Right cardiac atrium (tissue), 5 donors: ENCODE measurements at regions of chr11 and their contacts with region 1.

Region 1: DNA sequence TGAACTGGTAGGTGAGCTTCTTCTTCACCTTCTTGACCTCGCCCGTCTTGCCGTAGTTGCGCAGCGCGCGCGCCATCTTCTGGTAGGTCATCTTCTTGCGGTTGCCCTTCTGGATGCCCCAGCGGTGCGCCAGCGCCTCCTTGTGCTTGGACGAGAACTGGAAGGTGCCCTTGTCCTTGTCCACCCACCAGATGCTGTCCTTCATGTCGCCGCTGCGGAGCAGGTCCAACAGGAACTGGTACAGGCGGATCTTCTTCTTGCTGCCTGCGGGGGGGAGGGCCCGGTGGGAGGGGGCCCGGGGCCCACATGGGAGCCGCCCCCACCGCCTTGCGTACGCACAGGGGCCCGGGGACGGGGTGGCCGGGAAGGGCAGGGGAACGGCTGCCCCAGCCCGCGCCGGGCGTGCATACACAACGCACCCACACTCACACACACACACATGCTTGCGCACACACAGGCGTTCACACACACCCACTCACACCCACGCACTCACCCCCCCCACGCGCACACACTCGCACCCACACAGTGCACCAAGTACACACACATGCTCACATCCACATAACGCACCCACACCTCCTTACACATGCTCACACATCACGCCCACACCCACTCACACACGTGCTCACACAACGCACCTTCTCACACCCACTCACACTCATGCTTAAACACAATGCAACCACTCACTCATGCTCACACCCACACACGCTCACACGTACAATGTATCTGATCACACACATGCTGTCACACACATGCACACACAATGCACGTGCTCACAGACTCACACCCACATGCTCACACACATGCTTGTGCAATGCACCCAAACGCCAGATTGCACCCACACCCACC is 3.0 kb upstream of the MYBPC3 start:
- DNase-seq: peak; percentile 94 to 98 (median 98)
- ATAC-seq: peak; percentile 54 to 57
- H3K4me3 ChIP-seq: peak overlapping the region; percentile 59
- H3K27ac ChIP-seq: peak overlapping the region; percentile 1
- H3K4me1 ChIP-seq: no peaks in the 10 kb centered on the region
- H3K27me3 ChIP-seq: no peaks in the 10 kb centered on the region

Region 2: GRCh38 chr11:47176328-47177228 is 178.9 kb before region 1 on chr11 and contains the start of gene ARFGAP2:
- intact Hi-C with region 1: loop called in 3 of 4 experiments (anchors 2 to 10 kb)
- DNase-seq: peak; percentile 97 to 99 (median 99)
- ATAC-seq: peak; percentile 95 to 96
- H3K4me3 ChIP-seq: peak within 1 kb of the TSS; percentile 82
- H3K27ac ChIP-seq: peak within 1 kb of the TSS; percentile 99
- H3K4me1 ChIP-seq: peaks cover 13% of the 10 kb centered on the region
- H3K27me3 ChIP-seq: no peaks in the 10 kb centered on the region
- total RNA-seq, gene ARFGAP2: 43.8 to 67.4 (median 56.5) TPM

Region 3: GRCh38 chr11:47186076-47186936 is 169.2 kb before region 1 on chr11 and contains the start of gene PACSIN3:
- intact Hi-C with region 1: loop called in 1 of 4 experiments (anchors 10 kb)
- DNase-seq: peak; percentile 49 to 84 (median 77)
- ATAC-seq: peak; percentile 56 to 61
- H3K4me3 ChIP-seq: peak within 1 kb of the TSS; percentile 70
- H3K27ac ChIP-seq: peak within 1 kb of the TSS; percentile 97
- H3K4me1 ChIP-seq: no peaks in the 10 kb centered on the region
- H3K27me3 ChIP-seq: no peaks in the 10 kb centered on the region
- total RNA-seq, gene PACSIN3: 110 to 156 (median 123) TPM

Region 4: DNA sequence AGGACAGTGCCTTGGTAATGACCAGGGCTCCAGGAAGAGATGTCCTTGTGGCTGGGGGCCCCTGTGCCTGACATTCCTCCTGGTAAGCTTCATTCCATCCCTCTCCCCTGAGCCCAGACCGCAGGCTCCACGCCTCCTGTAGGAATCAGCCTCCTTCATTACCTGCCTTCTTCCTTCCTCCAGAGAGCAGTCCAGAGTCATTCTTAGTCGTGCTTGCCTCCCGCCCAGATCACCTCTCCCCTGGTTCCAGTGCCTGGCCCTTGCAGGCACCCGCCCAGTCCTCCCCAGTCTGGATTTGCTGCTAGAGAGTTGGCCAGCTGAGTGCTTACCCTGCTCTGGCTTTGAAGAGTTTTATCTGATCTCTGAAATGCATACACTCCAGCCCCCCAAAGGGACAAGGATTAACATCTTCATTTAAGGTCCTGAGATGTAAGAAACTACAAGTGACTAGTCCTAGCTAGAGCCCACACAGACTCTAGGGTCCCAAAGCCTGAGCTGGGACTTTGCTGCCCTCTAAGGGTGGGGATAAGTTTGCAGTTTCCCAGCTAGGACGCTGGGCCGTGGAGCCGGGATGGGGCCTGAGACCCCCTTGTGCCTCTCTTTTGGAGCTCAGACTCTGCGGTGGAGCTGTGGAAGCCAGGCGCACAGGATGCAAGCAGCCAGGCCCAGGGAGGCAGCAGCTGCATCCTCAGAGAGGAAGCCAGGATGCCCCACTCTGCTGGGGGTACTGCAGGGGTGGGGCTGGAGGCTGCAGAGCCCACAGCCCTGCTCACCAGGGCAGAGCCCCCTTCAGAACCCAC is 96.1 kb before region 1 on chr11:
- intact Hi-C with region 1: loop called in 2 of 4 experiments (anchors 5 to 10 kb)
- DNase-seq: no peak
- ATAC-seq: peak; percentile 10 to 20
- H3K4me3 ChIP-seq: no peak overlapping the region
- H3K27ac ChIP-seq: peak overlapping the region; percentile 49
- H3K4me1 ChIP-seq: peaks cover 11% of the 10 kb centered on the region
- H3K27me3 ChIP-seq: no peaks in the 10 kb centered on the region

Region 5: GRCh38 chr11:47269002-47269828 is 86.3 kb before region 1 on chr11:
- intact Hi-C with region 1: loop called in 2 of 4 experiments (anchors 10 kb)
- DNase-seq: peak; percentile 92 to 97 (median 96)
- ATAC-seq: peak; percentile 94
- H3K4me3 ChIP-seq: peak overlapping the region; percentile 81
- H3K27ac ChIP-seq: peak overlapping the region; percentile 96
- H3K4me1 ChIP-seq: peaks cover 9% of the 10 kb centered on the region
- H3K27me3 ChIP-seq: no peaks in the 10 kb centered on the region